Activated CD8-positive, alpha-beta T cell treated with anti-CD3 and anti-CD28 coated beads for 36 hours (primary cell): ENCODE measurements at regions of chr1 and their contacts with region 1.

Region 1: DNA sequence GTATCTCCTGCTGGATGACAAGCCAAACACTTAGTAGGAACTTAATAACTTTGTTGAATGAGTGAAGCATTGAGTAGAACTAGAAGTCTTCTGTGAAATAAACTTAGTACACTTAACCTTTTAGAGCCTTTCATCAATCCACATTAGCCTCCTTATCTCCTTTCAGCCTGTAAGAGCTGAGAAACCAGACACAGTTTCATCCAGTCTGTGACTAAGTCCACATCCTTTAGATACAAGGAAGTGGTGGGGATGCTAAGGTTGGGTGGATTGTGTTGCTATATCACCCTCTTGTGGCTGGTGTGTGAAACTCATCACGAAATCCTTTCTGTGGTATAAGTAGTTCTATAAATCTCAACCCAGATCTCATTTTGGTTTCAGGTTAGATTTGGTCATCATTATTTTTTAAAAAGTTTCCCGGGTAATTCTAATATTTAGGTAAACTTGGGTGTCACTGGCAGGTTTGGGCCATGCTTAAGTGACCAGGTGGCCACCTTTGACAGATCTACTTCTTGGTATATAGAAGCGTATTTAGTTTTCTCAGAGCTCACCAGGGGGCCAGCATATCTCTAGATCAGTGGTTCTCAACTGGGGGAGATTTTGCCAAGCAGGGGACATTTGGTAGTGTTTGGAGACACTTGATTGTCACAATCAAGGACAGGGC is 27.8 kb upstream of the CD84 start:
- DNase-seq: peak; percentile 76
- ATAC-seq: peak; percentile 95
- H3K4me3 Mint-ChIP-seq: no peak overlapping the region
- H3K27ac Mint-ChIP-seq: peak overlapping the region; percentile 89
- H3K4me1 Mint-ChIP-seq: peaks cover 55% of the 10 kb centered on the region
- H3K27me3 Mint-ChIP-seq: no peaks in the 10 kb centered on the region
- CTCF ChIP-seq: peak; percentile 93

Region 2: DNA sequence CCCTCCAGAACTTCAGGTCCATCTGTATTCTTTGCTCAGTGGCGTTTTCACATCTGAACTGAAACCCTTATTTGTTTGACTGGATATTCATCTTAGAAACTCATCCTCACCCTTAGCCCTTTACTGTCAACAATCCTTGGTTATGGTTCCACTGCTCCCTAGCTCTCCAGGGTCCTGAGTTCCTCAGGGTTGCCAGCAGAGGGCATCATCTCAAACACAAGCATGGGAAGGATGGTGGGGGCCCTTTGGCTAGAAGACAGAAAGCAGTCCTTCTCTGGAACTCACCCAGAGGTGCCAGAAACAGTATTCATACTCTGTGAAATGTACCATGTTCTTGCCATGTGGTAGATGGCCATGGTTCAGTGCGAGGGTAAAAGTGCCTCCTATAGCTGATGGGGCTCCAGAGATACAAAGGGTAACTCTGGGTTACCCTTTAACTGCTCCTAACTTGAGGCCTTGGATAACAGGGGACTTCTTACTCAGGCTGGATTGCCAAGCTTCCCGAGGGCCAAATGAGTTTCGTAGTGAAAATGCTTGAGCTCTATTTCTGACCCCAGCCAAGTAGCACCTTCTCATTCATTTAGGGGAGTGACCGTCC is 252.7 kb before region 1 on chr1:
- CTCF ChIA-PET with region 1: interaction called, 10 read pairs
- POLR2A ChIA-PET with region 1: no interaction called
- intact Hi-C with region 1: no loop called
- DNase-seq: peak; percentile 24
- ATAC-seq: peak; percentile 70
- H3K4me3 Mint-ChIP-seq: no peak overlapping the region
- H3K27ac Mint-ChIP-seq: no peak overlapping the region
- H3K4me1 Mint-ChIP-seq: peaks cover 2% of the 10 kb centered on the region
- H3K27me3 Mint-ChIP-seq: no peaks in the 10 kb centered on the region
- CTCF ChIP-seq: peak; percentile 11

Region 3: GRCh38 chr1:160420881-160421842 is 186.0 kb before region 1 on chr1:
- CTCF ChIA-PET with region 1: interaction called, 10 read pairs
- POLR2A ChIA-PET with region 1: interaction called, 3 read pairs
- intact Hi-C with region 1: no loop called
- DNase-seq: no peak
- ATAC-seq: no peak
- H3K4me3 Mint-ChIP-seq: no peak overlapping the region
- H3K27ac Mint-ChIP-seq: no peak overlapping the region
- H3K4me1 Mint-ChIP-seq: no peaks in the 10 kb centered on the region
- H3K27me3 Mint-ChIP-seq: no peaks in the 10 kb centered on the region
- CTCF ChIP-seq: no peak

Region 4: GRCh38 chr1:160466961-160467360 is 140.2 kb before region 1 on chr1:
- CTCF ChIA-PET with region 1: interaction called, 12 read pairs
- POLR2A ChIA-PET with region 1: no interaction called
- intact Hi-C with region 1: no loop called
- DNase-seq: no peak
- ATAC-seq: no peak
- H3K4me3 Mint-ChIP-seq: no peak overlapping the region
- H3K27ac Mint-ChIP-seq: peak overlapping the region; percentile 87
- H3K4me1 Mint-ChIP-seq: peaks cover 60% of the 10 kb centered on the region
- H3K27me3 Mint-ChIP-seq: no peaks in the 10 kb centered on the region
- CTCF ChIP-seq: no peak

Region 5: DNA sequence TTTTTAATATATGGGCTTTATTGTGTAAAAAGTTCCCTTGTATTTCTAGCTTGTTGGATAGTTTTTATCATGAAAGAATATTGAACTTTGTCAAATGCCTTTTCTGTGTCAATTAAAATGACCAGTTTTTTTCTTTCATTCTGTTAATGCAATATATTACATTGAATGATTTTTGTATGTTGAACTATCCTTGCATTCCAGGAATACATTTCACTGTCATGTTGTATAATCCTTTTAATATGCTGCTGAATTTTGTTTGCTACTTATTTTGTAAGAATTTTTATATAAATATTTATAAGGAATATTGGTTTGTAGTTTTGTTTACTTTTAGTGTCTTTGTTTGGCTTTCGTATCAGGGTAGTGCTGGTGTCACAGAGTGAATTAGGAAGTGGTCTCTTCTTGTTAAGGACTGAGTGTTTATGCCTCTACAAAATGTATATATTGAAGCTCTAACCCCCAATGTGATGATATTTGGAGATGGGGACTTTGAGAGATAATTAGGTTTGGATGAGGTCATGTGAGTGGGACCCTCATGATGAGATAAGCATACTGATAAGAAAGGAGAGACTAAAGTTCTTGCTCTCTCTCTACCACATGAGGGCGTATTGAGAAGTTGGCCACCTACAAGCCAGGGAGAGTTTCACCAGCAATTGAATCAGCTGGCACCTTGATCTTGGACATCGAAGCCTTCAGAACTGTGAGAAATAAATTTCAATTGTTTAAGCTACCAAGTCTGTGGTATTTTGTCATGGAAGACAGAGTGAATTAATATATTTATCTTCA is 72.1 kb before region 1 on chr1:
- CTCF ChIA-PET with region 1: interaction called, 25 read pairs
- POLR2A ChIA-PET with region 1: no interaction called
- intact Hi-C with region 1: no loop called
- DNase-seq: no peak
- ATAC-seq: no peak
- H3K4me3 Mint-ChIP-seq: no peak overlapping the region
- H3K27ac Mint-ChIP-seq: no peak overlapping the region
- H3K4me1 Mint-ChIP-seq: peaks cover 31% of the 10 kb centered on the region
- H3K27me3 Mint-ChIP-seq: no peaks in the 10 kb centered on the region
- CTCF ChIP-seq: peak; percentile 13

Region 6: GRCh38 chr1:160575112-160575664 is 32.0 kb before region 1 on chr1:
- CTCF ChIA-PET with region 1: interaction called, 34 read pairs
- POLR2A ChIA-PET with region 1: interaction called, 4 read pairs
- intact Hi-C with region 1: no loop called
- DNase-seq: peak; percentile 31
- ATAC-seq: peak; percentile 59
- H3K4me3 Mint-ChIP-seq: peak overlapping the region; percentile 85
- H3K27ac Mint-ChIP-seq: peak overlapping the region; percentile 94
- H3K4me1 Mint-ChIP-seq: peaks cover 85% of the 10 kb centered on the region
- H3K27me3 Mint-ChIP-seq: no peaks in the 10 kb centered on the region
- CTCF ChIP-seq: no peak

Region 7: DNA sequence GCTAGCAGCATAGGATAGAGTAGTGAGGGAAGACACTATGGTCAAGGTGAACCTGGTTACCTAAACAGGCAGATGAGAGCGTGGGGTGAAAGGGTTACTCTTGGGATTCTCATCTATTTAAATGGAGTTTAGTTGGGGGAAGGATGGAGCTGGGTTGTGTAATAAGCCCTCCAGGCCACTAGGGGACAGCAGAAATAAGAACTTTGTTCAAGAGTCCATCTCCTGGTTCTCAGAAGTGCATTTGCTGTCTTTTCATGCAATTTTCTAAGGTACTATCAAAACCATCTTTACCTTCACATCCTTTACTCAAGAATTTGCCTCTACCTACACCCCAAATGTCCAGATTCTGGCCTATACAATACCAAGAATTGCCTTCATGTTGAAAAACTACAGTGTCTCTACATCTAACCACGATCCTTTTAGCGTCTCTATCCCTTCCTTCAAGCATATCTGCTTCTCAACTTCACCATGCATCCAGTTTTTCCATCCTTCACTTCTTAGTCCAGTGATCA is 11.7 kb after region 1 on chr1:
- CTCF ChIA-PET with region 1: interaction called, 34 read pairs
- POLR2A ChIA-PET with region 1: interaction called, 19 read pairs
- intact Hi-C with region 1: no loop called
- DNase-seq: peak; percentile 63
- ATAC-seq: peak; percentile 24
- H3K4me3 Mint-ChIP-seq: no peak overlapping the region
- H3K27ac Mint-ChIP-seq: peak overlapping the region; percentile 81
- H3K4me1 Mint-ChIP-seq: peaks cover 56% of the 10 kb centered on the region
- H3K27me3 Mint-ChIP-seq: no peaks in the 10 kb centered on the region
- CTCF ChIP-seq: peak; percentile 91

Region 8: GRCh38 chr1:160637821-160638539 is 30.8 kb after region 1 on chr1:
- CTCF ChIA-PET with region 1: no interaction called
- POLR2A ChIA-PET with region 1: no interaction called
- intact Hi-C with region 1: no loop called
- DNase-seq: peak; percentile 77
- ATAC-seq: peak; percentile 37
- H3K4me3 Mint-ChIP-seq: peak overlapping the region; percentile 74
- H3K27ac Mint-ChIP-seq: peak overlapping the region; percentile 98
- H3K4me1 Mint-ChIP-seq: peaks cover 92% of the 10 kb centered on the region
- H3K27me3 Mint-ChIP-seq: no peaks in the 10 kb centered on the region
- CTCF ChIP-seq: no peak

Region 9: GRCh38 chr1:160704250-160704649 is 97.1 kb after region 1 on chr1:
- CTCF ChIA-PET with region 1: no interaction called
- POLR2A ChIA-PET with region 1: no interaction called
- intact Hi-C with region 1: no loop called
- DNase-seq: no peak
- ATAC-seq: no peak
- H3K4me3 Mint-ChIP-seq: peak overlapping the region; percentile 55
- H3K27ac Mint-ChIP-seq: peak overlapping the region; percentile 83
- H3K4me1 Mint-ChIP-seq: peaks cover 68% of the 10 kb centered on the region
- H3K27me3 Mint-ChIP-seq: no peaks in the 10 kb centered on the region
- CTCF ChIP-seq: no peak